ENCODE measurements at regions of chr1 and their contacts with region 1.

Region 1: DNA sequence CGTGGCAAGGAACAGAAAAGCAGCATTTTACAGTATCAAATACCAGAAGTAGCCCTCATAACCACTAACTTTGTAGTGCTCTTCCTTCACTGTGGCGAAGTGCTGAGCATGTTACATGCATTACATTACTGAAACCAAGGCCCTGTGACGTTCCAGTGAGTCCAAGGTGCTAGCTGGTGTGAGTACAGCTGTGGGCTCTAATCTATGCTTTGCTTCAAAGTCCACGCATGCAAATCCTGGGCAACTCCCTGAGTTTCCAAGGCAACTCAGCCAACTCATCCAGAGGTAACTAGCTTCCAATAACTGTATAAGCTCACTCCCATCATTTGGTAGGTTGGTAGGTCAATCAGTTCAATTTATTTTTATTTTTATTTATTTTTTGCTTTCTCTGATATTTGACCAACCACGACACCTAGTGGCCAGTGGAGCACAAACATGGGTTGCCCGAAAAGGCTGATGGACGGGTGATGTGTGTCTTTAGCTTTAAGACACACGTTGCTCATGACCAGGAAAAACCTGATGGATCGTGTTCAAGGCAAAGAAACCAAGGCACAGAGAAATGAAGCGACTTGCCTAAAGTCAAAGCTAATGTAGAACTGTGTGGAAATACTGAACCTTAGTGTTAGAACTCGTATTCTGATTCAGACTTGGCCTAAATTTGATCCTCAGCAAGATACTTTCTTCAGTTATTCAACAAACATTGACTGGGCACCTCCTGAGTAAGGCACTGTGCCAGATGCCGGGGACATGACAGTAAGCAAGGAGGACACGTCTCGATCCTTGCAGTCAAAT is 73.0 kb downstream of the GNG12 start:
- DNase-seq: peak; percentile 40 to 78 (median 47)
- ATAC-seq: peak; percentile 59
- H3K4me3 ChIP-seq: no peak overlapping the region
- H3K4me3 Mint-ChIP-seq: no peak overlapping the region
- H3K27ac ChIP-seq: no peak overlapping the region
- H3K27ac Mint-ChIP-seq: no peak overlapping the region
- H3K4me1 ChIP-seq: no peaks in the 10 kb centered on the region
- H3K4me1 Mint-ChIP-seq: no peaks in the 10 kb centered on the region
- H3K27me3 ChIP-seq: peaks cover 9 to 10% of the 10 kb centered on the region in 2 experiments
- H3K27me3 Mint-ChIP-seq: peaks cover 29% of the 10 kb centered on the region
- CTCF ChIP-seq: peak; percentile 96

Region 2: GRCh38 chr1:67230539-67230938 is 529.7 kb before region 1 on chr1:
- CTCF ChIA-PET with region 1: no interaction called
- POLR2A ChIA-PET with region 1: no interaction called
- intact Hi-C with region 1: loop called in 1 of 2 experiments (anchors 10 kb)
- DNase-seq: no peak
- ATAC-seq: no peak
- H3K4me3 ChIP-seq: no peak overlapping the region
- H3K4me3 Mint-ChIP-seq: no peak overlapping the region
- H3K27ac ChIP-seq: no peak overlapping the region
- H3K27ac Mint-ChIP-seq: no peak overlapping the region
- H3K4me1 ChIP-seq: no peaks in the 10 kb centered on the region
- H3K4me1 Mint-ChIP-seq: no peaks in the 10 kb centered on the region
- H3K27me3 ChIP-seq: no peaks in the 10 kb centered on the region
- H3K27me3 Mint-ChIP-seq: no peaks in the 10 kb centered on the region
- CTCF ChIP-seq: no peak

Region 3: GRCh38 chr1:67532452-67533216 is 227.6 kb before region 1 on chr1:
- CTCF ChIA-PET with region 1: interaction called, 9 read pairs
- POLR2A ChIA-PET with region 1: interaction called, 4 read pairs
- intact Hi-C with region 1: loop called (anchors 1 kb)
- DNase-seq: peak in 4 of 14 experiments; percentile 7 to 63 (median 44)
- ATAC-seq: no peak
- H3K4me3 ChIP-seq: no peak overlapping the region
- H3K4me3 Mint-ChIP-seq: no peak overlapping the region
- H3K27ac ChIP-seq: no peak overlapping the region
- H3K27ac Mint-ChIP-seq: no peak overlapping the region
- H3K4me1 ChIP-seq: no peaks in the 10 kb centered on the region
- H3K4me1 Mint-ChIP-seq: no peaks in the 10 kb centered on the region
- H3K27me3 ChIP-seq: no peaks in the 10 kb centered on the region
- H3K27me3 Mint-ChIP-seq: no peaks in the 10 kb centered on the region
- CTCF ChIP-seq: peak; percentile 55

Region 4: DNA sequence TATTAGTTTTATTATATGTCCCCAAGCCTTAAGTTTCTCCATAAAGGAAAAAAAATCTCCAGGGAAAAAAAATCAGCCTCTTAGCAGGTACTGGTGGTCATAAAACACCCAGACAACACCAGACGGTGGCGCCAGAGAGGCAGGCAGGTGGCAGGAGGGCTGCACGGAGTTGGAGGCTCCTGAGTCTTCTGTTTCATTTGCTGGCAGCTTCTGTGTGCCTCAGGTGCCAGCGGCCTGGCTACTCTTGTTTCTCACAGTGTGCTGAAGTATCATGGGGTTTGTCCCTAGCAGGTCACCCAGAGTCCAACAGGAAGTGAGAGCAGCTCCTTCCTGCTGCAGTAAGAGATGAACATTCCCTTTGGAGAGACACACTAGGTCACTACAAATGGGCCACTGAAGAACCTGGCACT is 198.5 kb before region 1 on chr1:
- CTCF ChIA-PET with region 1: interaction called, 54 read pairs
- POLR2A ChIA-PET with region 1: interaction called, 10 read pairs
- intact Hi-C with region 1: loop called (anchors 1 kb)
- DNase-seq: peak; percentile 71 to 87 (median 78)
- ATAC-seq: peak; percentile 85
- H3K4me3 ChIP-seq: no peak overlapping the region
- H3K4me3 Mint-ChIP-seq: no peak overlapping the region
- H3K27ac ChIP-seq: no peak overlapping the region
- H3K27ac Mint-ChIP-seq: no peak overlapping the region
- H3K4me1 ChIP-seq: peaks cover 4% of the 10 kb centered on the region
- H3K4me1 Mint-ChIP-seq: no peaks in the 10 kb centered on the region
- H3K27me3 ChIP-seq: no peaks in the 10 kb centered on the region
- H3K27me3 Mint-ChIP-seq: peaks cover 23% of the 10 kb centered on the region
- CTCF ChIP-seq: peak; percentile 84

Region 5: GRCh38 chr1:67732750-67733151 is 27.5 kb before region 1 on chr1:
- CTCF ChIA-PET with region 1: no interaction called
- POLR2A ChIA-PET with region 1: no interaction called
- intact Hi-C with region 1: no loop called
- DNase-seq: no peak
- ATAC-seq: no peak
- H3K4me3 ChIP-seq: no peak overlapping the region
- H3K4me3 Mint-ChIP-seq: no peak overlapping the region
- H3K27ac ChIP-seq: no peak overlapping the region
- H3K27ac Mint-ChIP-seq: no peak overlapping the region
- H3K4me1 ChIP-seq: peaks cover 19% of the 10 kb centered on the region
- H3K4me1 Mint-ChIP-seq: peaks cover 27% of the 10 kb centered on the region
- H3K27me3 ChIP-seq: no peaks in the 10 kb centered on the region
- H3K27me3 Mint-ChIP-seq: no peaks in the 10 kb centered on the region
- CTCF ChIP-seq: no peak

Measured in CD4-positive, alpha-beta T cell (primary cell).